Posterior vena cava (tissue), 2 donors: ENCODE measurements at regions of chr12 and their contacts with region 1.

Region 1: GRCh38 chr12:38384816-38385378 is 68.3 kb downstream of the ALG10B start:
- DNase-seq: no peak

Region 2: GRCh38 chr12:38469715-38470114 is 84.8 kb after region 1 on chr12:
- intact Hi-C with region 1: no loop called
- DNase-seq: no peak

Region 3: GRCh38 chr12:38490941-38491340 is 106.0 kb after region 1 on chr12:
- intact Hi-C with region 1: no loop called
- DNase-seq: no peak

Region 4: GRCh38 chr12:39224971-39225370 is 840.1 kb after region 1 on chr12:
- intact Hi-C with region 1: loop called in 1 of 2 experiments (anchors 5 kb)
- DNase-seq: no peak